Posterior cingulate gyrus (tissue), 11 donors: ENCODE measurements at regions of chr19 and their contacts with region 1.

Region 1: GRCh38 chr19:10717356-10718204 is at the start of gene DNM2:
- DNase-seq: peak; percentile 97 to 100 (median 98)

Region 2: DNA sequence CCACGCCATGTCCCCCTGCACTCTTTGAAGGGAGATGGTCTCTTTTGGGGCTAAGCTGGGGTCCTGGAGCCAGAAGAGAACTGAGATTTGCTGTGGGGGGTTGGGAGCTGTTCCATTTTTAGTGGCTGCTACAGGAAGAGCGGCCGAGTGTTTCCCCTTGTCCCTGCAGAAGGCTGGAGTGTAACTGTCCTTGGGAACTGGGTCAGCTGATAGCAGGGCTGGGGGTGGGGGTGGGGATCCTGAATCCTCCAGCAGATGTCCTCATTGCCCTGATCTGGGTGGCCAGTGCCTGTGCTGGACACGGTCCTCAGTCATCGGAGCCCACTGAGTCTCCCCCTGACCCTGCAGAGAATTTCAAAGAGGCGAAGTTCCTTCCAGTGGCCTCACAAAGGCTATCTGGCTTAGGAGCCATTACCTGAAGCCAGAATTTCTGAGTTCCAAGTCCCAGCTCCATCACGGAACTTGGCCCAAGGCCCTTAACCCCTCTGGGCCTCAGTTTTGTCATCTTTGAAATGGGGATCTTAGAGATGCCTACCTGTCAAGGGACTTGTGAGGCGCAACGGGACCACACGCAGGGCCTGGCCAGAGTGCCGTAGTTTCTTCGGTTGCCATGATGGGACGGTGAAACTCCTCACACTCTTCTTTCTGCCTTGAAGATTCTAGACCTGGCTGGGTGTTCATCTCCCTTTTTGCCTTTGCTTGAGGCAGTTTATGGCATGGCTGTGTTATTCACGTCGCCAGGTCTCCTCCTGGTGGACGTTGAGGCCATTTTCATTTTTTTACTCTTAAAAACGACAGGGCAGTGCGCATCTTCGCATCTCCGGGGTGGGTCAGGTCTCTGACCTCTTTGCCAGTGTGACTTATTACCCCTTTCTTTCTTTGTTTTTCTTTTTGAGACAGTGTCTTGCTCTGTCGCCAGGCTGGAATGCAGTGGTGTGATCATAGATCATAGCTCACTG is 52.2 kb after region 1 on chr19:
- intact Hi-C with region 1: loop called (anchors 1 kb)
- DNase-seq: peak in 5 of 10 donors; percentile 53 to 91 (median 59)

Region 3: DNA sequence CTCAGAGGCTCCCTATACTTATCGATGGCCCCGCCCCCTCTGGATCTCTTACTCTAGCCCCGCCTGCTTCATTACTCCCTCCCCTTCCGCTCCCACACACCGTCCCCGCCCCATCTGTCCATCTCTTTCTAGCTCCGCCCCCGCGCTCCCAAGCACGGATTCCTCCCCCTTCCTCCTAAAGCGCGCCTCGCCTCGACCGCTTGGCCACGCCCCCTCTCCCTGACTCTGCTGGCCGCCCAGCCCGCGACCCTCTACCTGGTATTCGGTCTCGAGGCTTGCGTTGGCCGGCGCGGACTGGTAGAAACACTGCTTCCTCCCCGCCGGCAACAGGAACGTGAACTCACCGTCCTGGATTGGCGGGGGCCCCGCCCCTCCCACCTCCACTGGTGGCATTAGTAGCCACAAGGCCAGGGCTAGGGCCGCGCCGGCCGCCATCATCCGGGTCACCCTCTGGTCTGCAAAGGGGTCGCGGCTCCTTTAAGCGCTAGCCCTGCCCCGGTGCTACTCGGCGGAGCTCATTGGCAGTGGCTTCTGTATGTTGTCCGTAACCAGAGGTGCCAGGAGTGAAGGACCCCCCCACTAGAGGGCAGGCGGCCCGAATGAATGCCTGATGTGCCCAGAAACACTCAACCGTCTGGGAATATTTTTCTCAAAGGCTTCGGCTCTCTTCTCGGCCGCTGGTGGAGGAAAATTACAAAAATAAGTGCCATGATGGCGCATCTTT is 118.3 kb after region 1 on chr19 and contains the start of gene TMED1:
- intact Hi-C with region 1: loop called (anchors 10 kb)
- DNase-seq: peak; percentile 95 to 100 (median 98)

Region 4: GRCh38 chr19:10864538-10864899 is 146.9 kb after region 1 on chr19:
- intact Hi-C with region 1: loop called (anchors 5 kb)
- DNase-seq: peak; percentile 62 to 97 (median 88)